ENCODE measurements at regions of chr11 and their contacts with region 1.

Region 1: DNA sequence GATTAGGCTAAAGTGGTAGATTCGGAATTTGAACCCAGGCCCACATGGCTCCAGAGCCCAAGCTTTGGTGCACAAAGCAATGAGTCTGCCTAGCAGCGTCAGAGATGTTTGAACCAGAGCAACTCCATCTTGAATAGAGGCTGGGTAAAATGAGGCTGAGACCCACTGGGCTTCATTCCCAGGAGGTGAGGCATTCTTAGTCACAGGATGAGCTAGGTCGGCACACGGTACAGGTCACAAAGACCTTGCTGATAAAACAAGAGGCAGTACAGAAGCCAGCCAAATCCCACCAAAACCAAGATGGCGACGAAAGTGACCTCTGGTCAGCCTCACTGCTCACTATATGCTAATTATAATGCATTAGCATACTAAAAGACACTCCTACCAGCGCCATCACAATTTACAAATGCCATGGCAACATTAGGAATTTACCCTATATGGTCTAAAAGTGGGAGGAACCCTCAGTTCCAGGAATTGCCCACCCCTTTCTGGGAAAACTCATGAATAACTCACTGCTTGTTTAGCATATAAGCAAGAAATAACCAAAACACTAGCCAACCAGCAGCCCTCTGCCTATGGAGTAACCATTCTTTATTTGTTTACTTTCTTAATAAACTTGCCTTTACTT is 40.3 kb upstream of the DAGLA start:
- DNase-seq: no peak
- ATAC-seq: no peak
- H3K4me3 ChIP-seq: no peak overlapping the region
- H3K27ac ChIP-seq: no peak overlapping the region
- H3K4me1 ChIP-seq: no peaks in the 10 kb centered on the region
- H3K27me3 ChIP-seq: no peaks in the 10 kb centered on the region
- CTCF ChIP-seq: no peak

Region 2: DNA sequence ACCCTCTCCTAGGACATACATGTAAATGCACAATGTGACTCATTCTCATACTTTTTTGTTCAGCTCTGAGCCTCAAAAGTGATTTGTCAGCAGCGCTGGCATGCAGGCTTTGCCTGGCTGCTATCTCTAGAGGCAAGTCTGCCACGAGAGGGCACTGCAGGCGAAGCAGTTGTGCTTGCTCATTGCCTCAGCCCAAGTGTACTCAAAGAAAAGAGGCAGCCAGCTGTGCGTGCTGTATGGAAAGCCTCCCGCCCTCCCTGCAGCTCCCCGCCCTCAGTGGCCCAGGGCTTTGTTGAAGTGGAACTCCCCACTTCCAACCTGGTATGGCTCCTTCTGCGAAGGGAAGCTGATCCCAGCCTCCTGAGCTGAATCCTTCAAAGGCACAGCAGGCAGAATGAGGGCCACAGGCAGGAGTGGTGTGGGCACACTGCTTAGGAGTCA is 193.7 kb before region 1 on chr11:
- intact Hi-C with region 1: loop called in 1 of 2 experiments (anchors 10 kb)
- DNase-seq: peak; percentile 93 to 97
- ATAC-seq: peak; percentile 83 to 87 (median 86)
- H3K4me3 ChIP-seq: no peak overlapping the region
- H3K27ac ChIP-seq: peak overlapping the region; percentile 89
- H3K4me1 ChIP-seq: peaks cover 51% of the 10 kb centered on the region
- H3K27me3 ChIP-seq: no peaks in the 10 kb centered on the region
- CTCF ChIP-seq: peak; percentile 88

Region 3: GRCh38 chr11:61477727-61478148 is 162.2 kb before region 1 on chr11:
- intact Hi-C with region 1: loop called (anchors 5 kb)
- DNase-seq: peak; percentile 62 to 79
- ATAC-seq: peak; percentile 42 to 64 (median 55)
- H3K4me3 ChIP-seq: no peak overlapping the region
- H3K27ac ChIP-seq: no peak overlapping the region
- H3K4me1 ChIP-seq: peaks cover 11% of the 10 kb centered on the region
- H3K27me3 ChIP-seq: peaks cover 0 to 12% (median 7%) of the 10 kb centered on the region in 3 donors
- CTCF ChIP-seq: peak; percentile 96

Region 4: GRCh38 chr11:61532139-61533038 is 107.5 kb before region 1 on chr11:
- intact Hi-C with region 1: loop called in 1 of 2 experiments (anchors 5 kb)
- DNase-seq: no peak
- ATAC-seq: peak; percentile 54 to 77 (median 64)
- H3K4me3 ChIP-seq: no peak overlapping the region
- H3K27ac ChIP-seq: no peak overlapping the region
- H3K4me1 ChIP-seq: no peaks in the 10 kb centered on the region
- H3K27me3 ChIP-seq: peaks cover 0 to 16% (median 0%) of the 10 kb centered on the region in 3 donors
- CTCF ChIP-seq: peak; percentile 74

Measured in psoas muscle (tissue), 8 donors.